K562 (cell line): ENCODE measurements at regions of chr15 and their contacts with region 1.

Region 1: GRCh38 chr15:95929232-95929846 is 401.2 kb upstream of the NR2F2 start:
- DNase-seq: peak; percentile 86 to 96 (median 86)
- ATAC-seq: peak; percentile 90
- H3K4me3 ChIP-seq: no peak overlapping the region
- H3K27ac ChIP-seq: peak overlapping the region; percentile 81
- H3K4me1 ChIP-seq: peaks cover 0 to 42% of the 10 kb centered on the region in 2 experiments; a peak in 4 of 5 replicates
- H3K27me3 ChIP-seq: no peaks in the 10 kb centered on the region
- CTCF ChIP-seq: no peak
- EP300 ChIP-seq: peak; percentile 99
- POLR2A ChIP-seq: no peak
- RAD21 ChIP-seq: peak; percentile 57 to 62

Region 2: DNA sequence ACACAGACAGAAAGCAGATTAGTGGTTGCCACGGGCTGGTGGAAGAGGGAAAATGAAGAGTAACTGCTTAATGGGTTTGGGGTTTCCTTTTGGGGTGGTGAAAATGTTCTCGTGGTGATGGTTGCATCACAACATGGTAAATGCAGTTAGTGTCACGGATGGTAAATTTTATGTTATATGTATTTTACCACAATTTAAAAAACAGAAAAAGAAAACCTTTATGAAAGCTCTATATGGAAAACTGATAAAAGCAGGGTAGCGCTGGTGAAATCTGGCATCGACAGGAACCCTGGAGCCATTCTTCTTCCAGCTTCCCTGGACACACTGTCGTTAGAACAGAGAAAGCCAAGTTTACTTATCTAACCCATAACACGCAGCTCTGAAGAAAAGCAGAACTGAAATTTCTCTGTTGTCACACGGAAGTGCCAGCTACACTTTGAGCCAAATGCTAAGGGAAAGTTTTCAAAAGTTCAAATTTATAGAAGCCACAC is 113.4 kb after region 1 on chr15:
- CTCF ChIA-PET with region 1: no interaction called
- POLR2A ChIA-PET with region 1: no interaction called
- in situ Hi-C with region 1: no loop called
- intact Hi-C with region 1: loop called (anchors 2 kb)
- DNase-seq: peak in 2 of 4 experiments; percentile 35 to 65
- ATAC-seq: peak; percentile 72
- H3K4me3 ChIP-seq: no peak overlapping the region
- H3K27ac ChIP-seq: peak overlapping the region; percentile 32
- H3K4me1 ChIP-seq: peaks cover 3 to 36% of the 10 kb centered on the region in 2 experiments; a peak in 3 of 5 replicates
- H3K27me3 ChIP-seq: no peaks in the 10 kb centered on the region
- CTCF ChIP-seq: no peak
- EP300 ChIP-seq: peak; percentile 11; the same call in 1 of the 2 replicates
- POLR2A ChIP-seq: no peak
- RAD21 ChIP-seq: no peak

Region 3: DNA sequence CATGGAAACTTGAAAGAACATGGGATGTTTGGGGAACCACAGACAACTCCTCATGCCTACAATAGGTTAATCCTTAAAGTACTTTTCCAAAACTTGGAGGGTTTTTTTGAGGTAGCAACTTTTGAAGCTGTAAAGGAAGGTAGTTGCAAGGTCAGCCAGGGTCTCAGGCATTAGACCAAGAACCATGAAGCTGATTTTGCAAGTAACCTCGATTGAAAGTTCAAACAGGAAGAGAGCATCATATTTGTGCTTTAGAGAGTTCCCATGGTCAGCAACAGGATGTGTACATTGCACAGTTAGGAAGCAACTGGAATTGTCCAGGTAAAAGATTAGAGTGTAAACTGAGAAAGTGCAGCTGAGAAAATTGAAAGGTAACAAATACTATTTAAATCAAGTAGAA is 201.4 kb after region 1 on chr15:
- CTCF ChIA-PET with region 1: no interaction called
- POLR2A ChIA-PET with region 1: no interaction called
- in situ Hi-C with region 1: no loop called
- intact Hi-C with region 1: loop called (anchors 10 kb)
- DNase-seq: no peak
- ATAC-seq: no peak
- H3K4me3 ChIP-seq: no peak overlapping the region
- H3K27ac ChIP-seq: no peak overlapping the region
- H3K4me1 ChIP-seq: peaks cover 0 to 9% of the 10 kb centered on the region in 2 experiments; a peak in 3 of 5 replicates
- H3K27me3 ChIP-seq: no peaks in the 10 kb centered on the region
- CTCF ChIP-seq: no peak
- EP300 ChIP-seq: no peak
- POLR2A ChIP-seq: no peak
- RAD21 ChIP-seq: no peak